ENCODE measurements at regions of chr10 and their contacts with region 1.

Region 1: DNA sequence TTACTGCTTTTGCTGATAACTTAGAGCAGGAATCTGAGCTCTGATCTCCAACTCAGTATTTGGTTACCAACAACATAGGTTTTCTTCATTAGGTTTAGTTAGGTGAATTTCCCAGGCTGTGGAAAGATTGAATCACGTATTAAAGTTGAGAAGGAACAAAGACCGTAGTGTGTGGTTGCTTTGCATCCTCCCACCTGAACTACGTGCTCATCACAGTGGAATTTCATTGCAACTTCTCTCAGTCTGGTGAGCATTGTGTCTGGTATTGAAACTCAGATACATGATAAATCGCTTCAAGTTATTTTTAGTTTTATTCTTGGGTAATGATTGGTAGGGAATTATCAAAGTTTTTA is 139.4 kb upstream of the AKR1E2 start:
- DNase-seq: no peak
- H3K4me3 ChIP-seq: no peak overlapping the region
- H3K27ac ChIP-seq: no peak overlapping the region
- H3K4me1 ChIP-seq: no peaks in the 10 kb centered on the region
- H3K27me3 ChIP-seq: no peaks in the 10 kb centered on the region
- CTCF ChIP-seq: no peak

Region 2: DNA sequence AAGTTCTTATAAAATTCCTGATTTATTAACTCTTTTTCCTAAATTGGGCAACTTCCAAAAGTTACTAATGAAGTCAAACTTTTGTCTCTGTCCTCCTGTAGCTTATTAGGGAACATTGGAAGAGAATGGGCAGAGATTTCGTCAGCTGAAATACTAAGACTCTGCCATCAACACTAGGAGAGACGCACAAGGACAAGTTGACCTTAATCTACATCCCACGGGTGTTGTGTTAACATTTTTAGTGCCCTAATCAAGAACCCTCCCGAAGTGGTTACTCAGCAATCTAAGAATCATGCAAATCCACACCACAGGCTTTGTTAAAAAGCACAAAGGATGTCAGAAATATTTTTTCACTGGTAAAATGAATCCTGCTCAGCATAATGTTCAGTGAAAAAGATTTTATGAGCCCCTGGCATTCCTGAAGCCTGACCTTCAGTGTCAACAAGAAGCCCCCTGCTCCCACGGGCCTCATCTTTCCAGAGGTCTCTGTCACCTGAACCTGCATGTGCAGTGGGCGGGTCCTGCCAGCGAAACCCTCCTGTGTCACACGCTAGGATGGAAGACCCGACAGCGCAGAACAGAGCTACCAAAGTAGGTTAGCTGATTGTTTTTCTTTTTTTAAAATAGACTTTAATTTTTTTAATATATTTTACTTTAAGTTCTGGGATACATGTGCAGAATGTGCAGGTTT is 68.8 kb after region 1 on chr10:
- intact Hi-C with region 1: loop called (anchors 10 kb)
- DNase-seq: no peak
- H3K4me3 ChIP-seq: no peak overlapping the region
- H3K27ac ChIP-seq: no peak overlapping the region
- H3K4me1 ChIP-seq: no peaks in the 10 kb centered on the region
- H3K27me3 ChIP-seq: no peaks in the 10 kb centered on the region
- CTCF ChIP-seq: no peak